Activated CD4-positive, alpha-beta T cell treated with anti-CD3 and anti-CD28 coated beads for 36 hours (primary cell): ENCODE measurements at regions of chr20 and their contacts with region 1.

Region 1: GRCh38 chr20:39049684-39050554 is 87.8 kb downstream of the DHX35 start:
- DNase-seq: peak; percentile 86
- ATAC-seq: peak; percentile 83
- H3K4me3 Mint-ChIP-seq: peak overlapping the region; percentile 68
- H3K27ac Mint-ChIP-seq: peak overlapping the region; percentile 48
- H3K4me1 Mint-ChIP-seq: peaks cover 5% of the 10 kb centered on the region
- H3K27me3 Mint-ChIP-seq: peaks cover 3% of the 10 kb centered on the region

Region 2: DNA sequence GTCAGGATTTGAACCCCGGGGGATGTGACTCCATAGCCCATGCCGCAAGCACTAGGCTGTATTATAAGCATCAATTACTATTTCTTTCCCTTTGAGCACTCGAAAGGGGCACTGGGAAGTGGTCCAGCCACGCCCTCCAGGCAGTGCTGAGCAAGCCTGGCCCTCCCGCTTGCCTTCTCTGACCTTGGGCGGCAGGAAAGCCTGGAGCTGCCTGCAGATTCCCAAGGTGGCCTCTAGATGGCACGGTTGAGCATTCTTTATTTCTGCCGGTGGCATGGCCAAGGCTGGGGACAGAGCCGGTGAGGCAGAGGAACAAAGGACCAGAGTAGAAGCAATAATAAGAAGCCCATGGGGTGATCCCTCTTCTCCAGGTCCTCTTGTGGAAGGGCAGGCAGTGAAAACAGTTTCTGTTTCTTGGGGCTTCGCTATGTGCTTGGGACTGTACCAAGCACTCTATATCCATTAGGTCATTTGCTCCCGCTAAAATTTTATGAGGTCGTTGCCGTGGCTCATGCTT is 416.3 kb before region 1 on chr20:
- CTCF ChIA-PET with region 1: interaction called, 3 read pairs
- POLR2A ChIA-PET with region 1: no interaction called
- intact Hi-C with region 1: loop called in 1 of 2 experiments (anchors 5 kb)
- DNase-seq: peak; percentile 79
- ATAC-seq: peak; percentile 95
- H3K4me3 Mint-ChIP-seq: no peak overlapping the region
- H3K27ac Mint-ChIP-seq: no peak overlapping the region
- H3K4me1 Mint-ChIP-seq: no peaks in the 10 kb centered on the region
- H3K27me3 Mint-ChIP-seq: peaks cover 10% of the 10 kb centered on the region

Region 3: GRCh38 chr20:38926142-38926933 is 123.6 kb before region 1 on chr20 and contains the start of gene FAM83D:
- CTCF ChIA-PET with region 1: interaction called, 68 read pairs
- POLR2A ChIA-PET with region 1: interaction called, 9 read pairs
- intact Hi-C with region 1: loop called (anchors 1 kb)
- DNase-seq: peak; percentile 99
- ATAC-seq: peak; percentile 98
- H3K4me3 Mint-ChIP-seq: peak within 1 kb of the TSS; percentile 81
- H3K27ac Mint-ChIP-seq: peak within 1 kb of the TSS; percentile 19
- H3K4me1 Mint-ChIP-seq: peaks cover 21% of the 10 kb centered on the region
- H3K27me3 Mint-ChIP-seq: no peaks in the 10 kb centered on the region
- total RNA-seq, gene FAM83D: 10.5 to 12.4 TPM

Region 4: GRCh38 chr20:39036851-39037250 is 13.1 kb before region 1 on chr20:
- CTCF ChIA-PET with region 1: interaction called, 21 read pairs
- POLR2A ChIA-PET with region 1: no interaction called
- intact Hi-C with region 1: no loop called
- DNase-seq: no peak
- ATAC-seq: no peak
- H3K4me3 Mint-ChIP-seq: no peak overlapping the region
- H3K27ac Mint-ChIP-seq: no peak overlapping the region
- H3K4me1 Mint-ChIP-seq: no peaks in the 10 kb centered on the region
- H3K27me3 Mint-ChIP-seq: no peaks in the 10 kb centered on the region

Region 5: GRCh38 chr20:39090906-39091305 is 41.0 kb after region 1 on chr20:
- CTCF ChIA-PET with region 1: interaction called, 10 read pairs
- POLR2A ChIA-PET with region 1: no interaction called
- intact Hi-C with region 1: no loop called
- DNase-seq: no peak
- ATAC-seq: no peak
- H3K4me3 Mint-ChIP-seq: no peak overlapping the region
- H3K27ac Mint-ChIP-seq: no peak overlapping the region
- H3K4me1 Mint-ChIP-seq: no peaks in the 10 kb centered on the region
- H3K27me3 Mint-ChIP-seq: peaks cover 10% of the 10 kb centered on the region